Natural killer cell (primary cell): ENCODE measurements at regions of chr4 and their contacts with region 1.

Region 1: DNA sequence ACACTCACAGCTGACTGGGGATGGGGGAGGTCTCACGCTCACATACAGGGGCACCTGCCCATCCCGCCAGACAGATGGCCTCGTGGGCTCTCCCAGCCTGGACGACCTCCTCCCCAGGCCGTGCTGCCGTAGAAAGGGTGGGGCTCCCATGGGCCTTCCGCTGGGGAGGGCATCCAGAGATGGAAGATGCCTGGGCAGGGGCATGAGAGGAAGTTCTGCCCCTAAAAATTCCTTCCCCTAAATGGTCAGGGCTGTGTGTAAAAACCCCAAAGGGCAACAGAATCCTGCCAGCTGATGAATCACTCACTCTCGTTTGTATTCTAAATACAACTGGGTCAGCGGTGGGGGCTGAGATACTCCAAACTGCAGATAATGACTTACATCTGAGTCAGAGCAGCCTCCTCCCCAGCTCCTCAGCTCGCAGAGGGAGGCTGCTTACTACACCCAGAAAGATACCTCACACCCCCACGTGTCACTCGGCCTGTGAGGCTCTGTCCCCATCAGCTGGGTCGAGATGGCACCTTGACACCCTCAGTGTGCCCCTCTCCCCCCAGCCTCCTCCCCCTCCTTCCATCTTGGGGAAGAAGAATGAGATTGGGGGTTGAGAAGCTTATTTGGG is 10.1 kb downstream of the WDR1 start:
- DNase-seq: peak; percentile 63 to 78
- ATAC-seq: peak; percentile 87 to 92 (median 90)
- H3K4me3 ChIP-seq: no peak overlapping the region
- H3K4me3 Mint-ChIP-seq: peak overlapping the region; percentile 64
- H3K27ac ChIP-seq: peak overlapping the region; percentile 66
- H3K27ac Mint-ChIP-seq: peak overlapping the region; percentile 82 to 99
- H3K4me1 ChIP-seq: peaks cover 90% of the 10 kb centered on the region
- H3K4me1 Mint-ChIP-seq: peaks cover 91 to 99% of the 10 kb centered on the region in 2 donors
- H3K27me3 ChIP-seq: no peaks in the 10 kb centered on the region
- H3K27me3 Mint-ChIP-seq: no peaks in the 10 kb centered on the region
- CTCF ChIP-seq: no peak

Region 2: DNA sequence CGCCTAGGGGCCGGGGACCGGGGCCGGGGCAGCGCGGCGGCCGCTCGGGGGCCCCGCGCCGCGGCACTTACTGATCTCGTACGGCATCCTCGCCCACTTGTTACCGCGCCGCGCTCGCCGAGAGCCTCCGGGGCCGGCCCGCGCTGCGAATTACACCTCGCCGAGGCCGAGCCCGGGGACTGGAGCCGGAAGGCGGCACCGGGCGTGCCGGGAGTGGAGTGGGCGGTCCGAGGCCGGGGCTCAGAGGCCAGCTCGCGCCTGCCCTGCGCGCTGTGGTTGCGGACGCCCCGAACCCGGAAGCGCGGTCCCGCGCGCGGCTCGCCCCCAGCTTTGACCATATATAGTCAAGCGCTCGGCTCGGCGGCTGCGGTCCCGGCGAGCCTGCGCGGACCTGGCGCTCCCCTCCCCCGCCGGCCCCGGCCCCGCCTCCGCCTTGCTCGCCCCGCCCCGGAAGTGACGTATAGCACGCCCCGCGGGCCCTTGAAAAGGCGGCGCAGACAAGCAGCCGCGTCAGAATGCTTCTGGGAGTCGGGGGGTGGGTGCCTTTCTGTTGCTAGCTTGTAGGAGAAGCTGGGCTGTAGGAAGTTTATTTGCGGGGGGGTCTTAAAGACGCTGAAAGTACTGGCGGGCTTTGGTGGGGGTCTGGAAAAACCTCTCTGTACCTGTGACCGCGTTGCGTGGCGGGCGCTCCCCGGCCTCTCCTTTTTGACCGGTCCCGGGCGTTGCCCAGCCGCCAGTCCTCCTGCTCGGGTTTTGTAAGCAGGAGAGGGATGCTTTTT is 10.2 kb after region 1 on chr4 and contains the start of gene WDR1:
- intact Hi-C with region 1: loop called (anchors 1 kb)
- DNase-seq: peak; percentile 93 to 94
- ATAC-seq: peak; percentile 83 to 93 (median 88)
- H3K4me3 ChIP-seq: peak within 1 kb of the TSS; percentile 68
- H3K4me3 Mint-ChIP-seq: peak within 1 kb of the TSS; percentile 94
- H3K27ac ChIP-seq: peak within 1 kb of the TSS; percentile 95
- H3K27ac Mint-ChIP-seq: peak within 1 kb of the TSS; percentile 98 to 99
- H3K4me1 ChIP-seq: peaks cover 49% of the 10 kb centered on the region
- H3K4me1 Mint-ChIP-seq: peaks cover 50 to 61% of the 10 kb centered on the region in 2 donors
- H3K27me3 ChIP-seq: no peaks in the 10 kb centered on the region
- H3K27me3 Mint-ChIP-seq: no peaks in the 10 kb centered on the region
- CTCF ChIP-seq: no peak
- total RNA-seq, gene WDR1: 411 to 477 (median 468) TPM